BJ (cell line): ENCODE measurements at regions of chr6 and their contacts with region 1.

Region 1: DNA sequence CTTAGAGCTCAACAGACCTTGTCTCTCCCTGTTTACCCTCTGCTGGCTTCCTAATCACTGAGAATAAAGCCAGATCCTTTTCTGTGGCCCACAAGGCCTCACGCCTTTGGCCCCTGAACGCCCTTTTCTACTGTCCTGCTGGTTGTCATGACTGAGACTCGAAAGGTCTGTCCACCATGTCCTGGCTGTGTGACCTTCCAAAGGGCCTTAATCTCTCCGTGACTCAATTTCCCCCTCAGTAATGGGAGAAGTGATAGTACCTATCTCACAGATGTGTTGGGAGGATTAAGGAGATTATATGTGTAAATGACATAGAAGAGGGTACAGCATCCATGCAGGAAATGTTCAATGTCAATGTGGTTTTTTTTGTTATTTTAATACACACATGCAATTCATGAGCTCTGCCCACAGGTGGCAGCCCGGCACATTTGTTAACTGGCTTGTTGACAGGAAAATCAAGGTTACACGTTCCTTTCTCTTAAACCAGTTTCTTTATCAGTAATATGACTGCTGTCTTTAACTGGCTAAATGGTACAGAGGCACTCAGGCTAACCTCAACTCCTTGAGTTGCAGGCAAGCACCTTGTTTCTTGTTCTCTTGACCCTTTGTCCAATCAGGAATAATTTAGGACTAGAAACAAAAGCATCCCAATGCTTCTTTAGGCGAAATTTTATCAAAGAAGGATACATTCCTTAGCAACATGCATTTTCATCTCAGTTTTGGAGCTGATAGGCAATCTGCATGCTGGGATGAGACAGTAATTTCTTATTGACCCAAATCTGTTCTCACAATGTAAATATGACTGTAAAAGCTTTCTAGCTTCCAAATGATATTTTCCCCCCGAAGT is 16.6 kb downstream of the SLC22A1 start:
- DNase-seq: peak; percentile 13
- H3K4me3 ChIP-seq: no peak overlapping the region
- H3K27me3 ChIP-seq: no peaks in the 10 kb centered on the region
- CTCF ChIP-seq: peak; percentile 79

Region 2: GRCh38 chr6:160117137-160117536 is 21.1 kb before region 1 on chr6:
- CTCF ChIA-PET with region 1: interaction called, 18 read pairs
- POLR2A ChIA-PET with region 1: no interaction called
- DNase-seq: no peak
- H3K4me3 ChIP-seq: no peak overlapping the region
- H3K27me3 ChIP-seq: no peaks in the 10 kb centered on the region
- CTCF ChIP-seq: no peak

Region 3: GRCh38 chr6:160462551-160463109 is 324.4 kb after region 1 on chr6:
- CTCF ChIA-PET with region 1: interaction called, 16 read pairs
- POLR2A ChIA-PET with region 1: no interaction called
- DNase-seq: peak; percentile 67
- H3K4me3 ChIP-seq: no peak overlapping the region
- H3K27me3 ChIP-seq: no peaks in the 10 kb centered on the region
- CTCF ChIP-seq: no peak